ENCODE measurements at regions of chr13 and their contacts with region 1.

Region 1: GRCh38 chr13:97432917-97433726 is 847 bp upstream of the RAP2A start:
- DNase-seq: peak; percentile 98 to 99
- ATAC-seq: peak; percentile 93 to 94
- H3K4me3 ChIP-seq: peak overlapping the region; percentile 73 to 99 (median 96)
- H3K27ac ChIP-seq: peak overlapping the region; percentile 92 to 100 (median 100)
- H3K4me1 ChIP-seq: peaks cover 38 to 51% of the 10 kb centered on the region in 2 donors
- H3K27me3 ChIP-seq: no peaks in the 10 kb centered on the region
- CTCF ChIP-seq: no peak
- POLR2A ChIP-seq: peak; percentile 54 to 77

Region 2: DNA sequence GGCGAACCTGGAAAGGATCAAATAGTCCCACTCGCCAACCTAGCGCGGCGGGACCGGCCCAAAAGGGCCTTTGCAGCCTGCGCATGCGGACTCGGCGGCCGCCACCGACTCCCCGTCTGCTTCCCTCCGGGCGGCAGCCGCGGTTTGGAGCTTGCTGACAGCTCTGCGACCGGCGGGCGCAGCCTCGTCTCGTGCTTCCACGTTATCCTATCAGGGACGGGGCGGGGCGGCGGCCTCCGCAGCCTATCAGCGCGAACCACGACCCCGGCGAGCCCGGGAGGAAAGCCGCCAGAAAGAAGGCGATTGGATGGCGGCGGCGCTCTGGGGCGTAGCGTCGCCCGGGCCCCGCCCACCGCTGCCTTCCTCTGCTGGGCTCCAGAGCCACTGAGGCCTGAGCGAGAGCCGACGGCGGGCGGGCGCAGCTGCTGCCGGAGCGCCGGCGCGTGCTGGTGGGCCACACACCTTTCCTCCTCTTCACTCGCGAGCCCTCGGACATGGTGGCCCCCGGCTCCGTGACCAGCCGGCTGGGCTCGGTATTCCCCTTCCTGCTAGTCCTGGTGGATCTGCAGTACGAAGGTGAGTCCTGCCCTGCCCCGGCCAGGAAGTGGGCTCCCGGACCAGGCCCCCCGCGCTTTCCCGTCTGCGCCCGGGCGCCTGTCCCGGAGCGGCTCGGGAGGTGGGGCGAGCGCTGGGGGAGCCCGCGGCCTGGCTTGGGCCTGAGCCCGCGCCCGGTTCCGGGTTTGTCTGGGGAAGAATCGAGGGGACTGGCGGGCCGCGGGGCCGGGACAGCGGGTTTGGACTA is 1756.2 kb before region 1 on chr13 and contains the start of gene DNAJC3:
- in situ Hi-C with region 1: no loop called
- intact Hi-C with region 1: loop called (anchors 5 kb)
- DNase-seq: peak; percentile 98 to 99
- ATAC-seq: peak; percentile 83 to 85
- H3K4me3 ChIP-seq: peak within 1 kb of the TSS; percentile 77 to 98 (median 82)
- H3K27ac ChIP-seq: peak within 1 kb of the TSS; percentile 98 to 99 (median 98)
- H3K4me1 ChIP-seq: peaks cover 56 to 60% of the 10 kb centered on the region in 2 donors
- H3K27me3 ChIP-seq: no peaks in the 10 kb centered on the region
- CTCF ChIP-seq: no peak
- POLR2A ChIP-seq: peak; percentile 99 to 100
- total RNA-seq, gene DNAJC3: 15.7 to 21.6 (median 20.5) TPM

Region 3: GRCh38 chr13:96720446-96720845 is 712.7 kb before region 1 on chr13:
- in situ Hi-C with region 1: no loop called
- intact Hi-C with region 1: no loop called
- DNase-seq: no peak
- ATAC-seq: no peak
- H3K4me3 ChIP-seq: no peak overlapping the region
- H3K27ac ChIP-seq: no peak overlapping the region
- H3K4me1 ChIP-seq: no peaks in the 10 kb centered on the region
- H3K27me3 ChIP-seq: no peaks in the 10 kb centered on the region
- CTCF ChIP-seq: no peak
- POLR2A ChIP-seq: no peak

Region 4: GRCh38 chr13:97109841-97110492 is 323.2 kb before region 1 on chr13:
- in situ Hi-C with region 1: no loop called
- intact Hi-C with region 1: loop called (anchors 5 kb)
- DNase-seq: peak; percentile 72 to 82
- ATAC-seq: peak; percentile 95 to 96
- H3K4me3 ChIP-seq: peak overlapping the region in 3 of 4 donors; percentile 21 to 42 (median 25)
- H3K27ac ChIP-seq: peak overlapping the region in 3 of 4 donors; percentile 50 to 63 (median 58)
- H3K4me1 ChIP-seq: peaks cover 3 to 18% of the 10 kb centered on the region in 2 donors
- H3K27me3 ChIP-seq: no peaks in the 10 kb centered on the region
- CTCF ChIP-seq: peak; percentile 94 to 100 (median 97)
- POLR2A ChIP-seq: no peak

Region 5: GRCh38 chr13:97221989-97222700 is 211.0 kb before region 1 on chr13 and contains the start of gene MBNL2:
- in situ Hi-C with region 1: no loop called
- intact Hi-C with region 1: loop called (anchors 2 kb)
- DNase-seq: peak; percentile 89 to 91
- ATAC-seq: peak; percentile 86 to 88
- H3K4me3 ChIP-seq: peak within 1 kb of the TSS; percentile 62 to 83 (median 70)
- H3K27ac ChIP-seq: peak within 1 kb of the TSS; percentile 89 to 93 (median 91)
- H3K4me1 ChIP-seq: peaks cover 28 to 32% of the 10 kb centered on the region in 2 donors
- H3K27me3 ChIP-seq: no peaks in the 10 kb centered on the region
- CTCF ChIP-seq: no peak
- POLR2A ChIP-seq: peak; percentile 59 to 87
- total RNA-seq, gene MBNL2: 47.9 to 92.0 (median 71.3) TPM

Region 6: DNA sequence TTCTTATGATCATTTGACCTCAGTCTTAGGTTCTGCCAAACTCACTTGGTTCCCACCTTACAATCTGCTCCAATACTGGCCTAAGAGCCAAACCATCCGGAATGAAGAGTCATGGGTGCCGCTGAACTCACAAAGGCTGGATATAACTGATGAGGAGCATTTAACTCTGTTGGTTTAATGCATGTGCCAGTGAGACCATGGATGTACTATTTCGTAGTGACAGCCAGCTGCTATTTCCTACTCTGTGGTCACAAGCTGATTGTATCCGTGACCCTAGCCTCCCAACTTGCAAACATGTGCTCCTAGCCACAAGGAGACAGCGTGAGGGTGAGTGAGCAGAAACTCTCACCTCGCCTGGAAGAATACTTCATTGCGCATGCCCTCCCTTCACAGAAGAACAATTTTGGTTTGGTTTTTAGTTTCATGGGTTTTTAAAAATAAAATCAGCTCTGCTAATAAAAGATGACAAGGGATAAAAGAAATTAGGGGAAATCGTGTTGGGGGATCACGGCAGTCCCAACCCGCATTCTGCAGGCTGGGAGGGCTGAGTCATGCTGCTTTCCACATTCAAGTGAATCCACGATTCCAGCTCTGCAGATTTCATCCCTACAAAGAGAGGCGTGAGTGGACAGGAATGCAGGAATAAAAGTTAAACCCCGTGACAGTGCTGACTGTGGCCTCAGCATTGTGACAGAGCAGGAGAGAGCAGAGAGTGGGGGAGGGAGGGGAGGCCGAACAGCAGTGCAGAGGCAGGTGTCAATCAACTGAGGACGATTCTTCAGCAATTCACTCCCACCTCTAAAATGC is 65.9 kb before region 1 on chr13:
- in situ Hi-C with region 1: loop called in 1 of 4 experiments (anchors 10 kb)
- intact Hi-C with region 1: loop called (anchors 2 kb)
- DNase-seq: peak; percentile 50 to 71
- ATAC-seq: peak; percentile 87 to 93
- H3K4me3 ChIP-seq: no peak overlapping the region
- H3K27ac ChIP-seq: peak overlapping the region; percentile 57 to 75 (median 67)
- H3K4me1 ChIP-seq: peaks cover 0 to 22% of the 10 kb centered on the region in 2 donors
- H3K27me3 ChIP-seq: no peaks in the 10 kb centered on the region
- CTCF ChIP-seq: no peak
- POLR2A ChIP-seq: peak in 1 of 2 donors; percentile 9

Region 7: GRCh38 chr13:97975848-97976609 is 542.9 kb after region 1 on chr13:
- in situ Hi-C with region 1: no loop called
- intact Hi-C with region 1: loop called (anchors 2 kb)
- DNase-seq: peak; percentile 78 to 87
- ATAC-seq: peak; percentile 92 to 93
- H3K4me3 ChIP-seq: peak overlapping the region; percentile 70 to 88 (median 84)
- H3K27ac ChIP-seq: peak overlapping the region; percentile 81 to 95 (median 90)
- H3K4me1 ChIP-seq: peaks cover 36 to 40% of the 10 kb centered on the region in 2 donors
- H3K27me3 ChIP-seq: no peaks in the 10 kb centered on the region
- CTCF ChIP-seq: peak in 1 of 5 experiments; percentile 24
- POLR2A ChIP-seq: peak; percentile 81 to 92